ENCODE measurements at regions of chr18 and their contacts with region 1.

Region 1: GRCh38 chr18:62131301-62131909 is 55.5 kb downstream of the PIGN start:
- DNase-seq: peak; percentile 79
- ATAC-seq: peak; percentile 61
- H3K4me3 Mint-ChIP-seq: no peak overlapping the region
- H3K27ac Mint-ChIP-seq: no peak overlapping the region
- H3K4me1 Mint-ChIP-seq: no peaks in the 10 kb centered on the region
- H3K27me3 Mint-ChIP-seq: no peaks in the 10 kb centered on the region

Region 2: GRCh38 chr18:61322265-61322873 is 809.0 kb before region 1 on chr18:
- CTCF ChIA-PET with region 1: no interaction called
- POLR2A ChIA-PET with region 1: no interaction called
- intact Hi-C with region 1: loop called in 1 of 2 experiments (anchors 1 kb)
- DNase-seq: peak; percentile 73
- ATAC-seq: peak; percentile 74
- H3K4me3 Mint-ChIP-seq: no peak overlapping the region
- H3K27ac Mint-ChIP-seq: no peak overlapping the region
- H3K4me1 Mint-ChIP-seq: no peaks in the 10 kb centered on the region
- H3K27me3 Mint-ChIP-seq: no peaks in the 10 kb centered on the region

Region 3: GRCh38 chr18:61551586-61551985 is 579.8 kb before region 1 on chr18:
- CTCF ChIA-PET with region 1: interaction called, 7 read pairs
- POLR2A ChIA-PET with region 1: no interaction called
- intact Hi-C with region 1: loop called in 1 of 2 experiments (anchors 1 kb)
- DNase-seq: peak; percentile 10
- ATAC-seq: no peak
- H3K4me3 Mint-ChIP-seq: no peak overlapping the region
- H3K27ac Mint-ChIP-seq: no peak overlapping the region
- H3K4me1 Mint-ChIP-seq: peaks cover 11% of the 10 kb centered on the region
- H3K27me3 Mint-ChIP-seq: peaks cover 10% of the 10 kb centered on the region

Region 4: DNA sequence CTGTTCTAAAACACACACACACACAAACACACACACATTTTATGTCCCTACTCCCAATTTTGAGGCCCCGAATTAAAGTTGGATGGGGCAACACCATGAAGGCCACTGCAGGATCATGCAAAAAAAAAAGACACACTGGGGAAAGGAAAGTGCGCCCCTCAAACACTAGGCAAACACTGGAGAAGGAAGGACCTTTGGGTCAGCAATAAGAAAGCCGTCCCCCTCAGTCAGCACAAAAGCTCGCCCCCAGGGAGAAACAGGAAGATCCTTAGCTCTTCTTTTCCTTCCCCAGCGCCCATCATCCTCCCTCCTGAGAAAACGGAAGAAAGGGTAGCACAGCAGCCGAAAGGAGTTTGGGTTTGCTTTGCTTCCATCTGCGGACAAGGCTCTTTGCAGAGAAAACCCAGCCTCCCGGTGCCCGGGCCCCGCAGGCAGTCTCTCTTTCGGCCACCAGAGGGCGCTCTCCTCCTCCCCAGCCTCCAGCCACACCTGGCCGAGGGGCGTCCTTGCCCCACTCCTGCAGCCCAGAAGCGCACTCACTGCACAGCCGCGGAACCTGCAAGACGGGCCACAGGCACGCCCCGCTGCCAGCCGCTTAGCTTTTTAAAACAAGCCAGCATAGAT is 549.7 kb before region 1 on chr18:
- CTCF ChIA-PET with region 1: interaction called, 11 read pairs
- POLR2A ChIA-PET with region 1: no interaction called
- intact Hi-C with region 1: loop called (anchors 1 kb)
- DNase-seq: peak; percentile 80
- ATAC-seq: peak; percentile 78
- H3K4me3 Mint-ChIP-seq: no peak overlapping the region
- H3K27ac Mint-ChIP-seq: no peak overlapping the region
- H3K4me1 Mint-ChIP-seq: peaks cover 6% of the 10 kb centered on the region
- H3K27me3 Mint-ChIP-seq: peaks cover 31% of the 10 kb centered on the region

Region 5: GRCh38 chr18:61635901-61636528 is 495.4 kb before region 1 on chr18:
- CTCF ChIA-PET with region 1: interaction called, 26 read pairs
- POLR2A ChIA-PET with region 1: no interaction called
- intact Hi-C with region 1: loop called (anchors 1 kb)
- DNase-seq: peak; percentile 65
- ATAC-seq: peak; percentile 60
- H3K4me3 Mint-ChIP-seq: no peak overlapping the region
- H3K27ac Mint-ChIP-seq: no peak overlapping the region
- H3K4me1 Mint-ChIP-seq: no peaks in the 10 kb centered on the region
- H3K27me3 Mint-ChIP-seq: peaks cover 8% of the 10 kb centered on the region

Region 6: DNA sequence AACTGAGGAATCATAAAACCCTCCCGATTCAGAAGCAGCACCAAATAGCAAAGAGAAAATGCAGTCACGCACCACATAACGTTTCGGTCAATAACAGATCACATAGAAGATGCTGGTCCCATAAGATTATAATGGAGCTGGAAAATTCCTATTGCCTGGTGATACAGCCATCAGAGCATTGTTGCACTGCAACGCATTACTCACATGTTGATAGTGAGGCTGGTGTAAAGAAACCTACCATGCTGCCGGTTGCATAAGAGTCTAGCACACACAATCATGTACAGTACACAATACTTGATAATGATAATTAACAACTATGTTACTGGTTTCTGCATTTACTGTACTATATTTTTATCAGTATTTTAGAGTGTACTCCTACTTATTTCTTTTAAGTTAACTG is 271.1 kb before region 1 on chr18:
- CTCF ChIA-PET with region 1: no interaction called
- POLR2A ChIA-PET with region 1: no interaction called
- intact Hi-C with region 1: loop called in 1 of 2 experiments (anchors 5 kb)
- DNase-seq: no peak
- ATAC-seq: no peak
- H3K4me3 Mint-ChIP-seq: no peak overlapping the region
- H3K27ac Mint-ChIP-seq: no peak overlapping the region
- H3K4me1 Mint-ChIP-seq: no peaks in the 10 kb centered on the region
- H3K27me3 Mint-ChIP-seq: no peaks in the 10 kb centered on the region

Region 7: GRCh38 chr18:61901323-61901986 is 229.9 kb before region 1 on chr18:
- CTCF ChIA-PET with region 1: interaction called, 7 read pairs
- POLR2A ChIA-PET with region 1: no interaction called
- intact Hi-C with region 1: loop called (anchors 2 kb)
- DNase-seq: peak; percentile 51
- ATAC-seq: peak; percentile 84
- H3K4me3 Mint-ChIP-seq: no peak overlapping the region
- H3K27ac Mint-ChIP-seq: no peak overlapping the region
- H3K4me1 Mint-ChIP-seq: no peaks in the 10 kb centered on the region
- H3K27me3 Mint-ChIP-seq: peaks cover 26% of the 10 kb centered on the region

Measured in activated CD4-positive, alpha-beta T cell treated with anti-CD3 and anti-CD28 coated beads for 36 hours (primary cell).